OCI-LY7 (cell line): ENCODE measurements at regions of chr20 and their contacts with region 1.

Region 1: DNA sequence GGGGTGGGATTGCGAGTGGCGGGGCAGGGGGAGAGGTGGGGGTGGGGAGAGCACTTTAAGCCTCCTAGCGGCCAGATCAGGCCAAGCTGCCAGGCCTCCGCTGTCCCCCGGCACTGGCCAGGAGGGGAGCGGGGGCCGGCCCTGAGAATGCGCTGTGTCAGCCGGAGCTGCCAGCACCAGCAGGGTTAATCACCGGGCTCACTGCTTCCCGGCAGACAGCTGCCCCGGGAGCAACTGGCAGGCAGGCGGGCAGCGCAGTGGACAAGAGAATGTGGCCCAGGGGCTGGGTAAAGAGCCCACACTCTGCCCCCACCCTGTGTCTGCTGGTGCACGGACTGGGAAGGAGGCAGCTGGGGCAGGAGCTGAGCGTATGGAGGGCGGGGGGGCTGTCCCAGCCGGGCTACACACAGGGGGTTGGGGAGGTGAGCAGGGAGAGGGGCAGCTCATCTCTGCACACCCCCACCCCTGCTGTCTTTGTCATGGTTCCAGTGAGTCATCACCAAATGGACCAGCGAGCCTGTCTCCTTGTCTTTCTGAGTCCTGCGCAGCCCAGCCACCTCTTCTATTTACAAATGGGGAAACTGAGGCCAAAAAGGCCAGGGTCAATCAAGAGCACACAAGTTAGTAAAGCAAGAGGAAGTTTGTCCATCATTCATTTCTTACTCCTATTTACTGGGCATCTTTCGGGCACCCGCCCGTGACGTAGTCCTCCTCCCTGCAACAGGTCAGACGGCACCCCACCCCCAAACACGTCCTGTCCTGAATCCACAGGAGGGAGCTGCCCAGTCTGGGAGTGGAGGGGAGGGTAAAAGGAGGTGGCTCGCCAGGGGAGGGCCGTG is 2.1 kb upstream of the LAMA5 start:
- DNase-seq: no peak
- H3K4me3 ChIP-seq: no peak overlapping the region
- H3K27ac ChIP-seq: no peak overlapping the region
- H3K4me1 ChIP-seq: peaks cover 39% of the 10 kb centered on the region
- CTCF ChIP-seq: peak; percentile 42

Region 2: GRCh38 chr20:62321521-62321948 is 47.7 kb before region 1 on chr20:
- CTCF ChIA-PET with region 1: no interaction called
- POLR2A ChIA-PET with region 1: no interaction called
- intact Hi-C with region 1: loop called (anchors 5 kb)
- DNase-seq: peak; percentile 80
- H3K4me3 ChIP-seq: no peak overlapping the region
- H3K27ac ChIP-seq: no peak overlapping the region
- H3K4me1 ChIP-seq: peaks cover 11% of the 10 kb centered on the region
- CTCF ChIP-seq: no peak